CD8-positive, alpha-beta T cell (primary cell): ENCODE measurements at regions of chr12 and their contacts with region 1.

Region 1: DNA sequence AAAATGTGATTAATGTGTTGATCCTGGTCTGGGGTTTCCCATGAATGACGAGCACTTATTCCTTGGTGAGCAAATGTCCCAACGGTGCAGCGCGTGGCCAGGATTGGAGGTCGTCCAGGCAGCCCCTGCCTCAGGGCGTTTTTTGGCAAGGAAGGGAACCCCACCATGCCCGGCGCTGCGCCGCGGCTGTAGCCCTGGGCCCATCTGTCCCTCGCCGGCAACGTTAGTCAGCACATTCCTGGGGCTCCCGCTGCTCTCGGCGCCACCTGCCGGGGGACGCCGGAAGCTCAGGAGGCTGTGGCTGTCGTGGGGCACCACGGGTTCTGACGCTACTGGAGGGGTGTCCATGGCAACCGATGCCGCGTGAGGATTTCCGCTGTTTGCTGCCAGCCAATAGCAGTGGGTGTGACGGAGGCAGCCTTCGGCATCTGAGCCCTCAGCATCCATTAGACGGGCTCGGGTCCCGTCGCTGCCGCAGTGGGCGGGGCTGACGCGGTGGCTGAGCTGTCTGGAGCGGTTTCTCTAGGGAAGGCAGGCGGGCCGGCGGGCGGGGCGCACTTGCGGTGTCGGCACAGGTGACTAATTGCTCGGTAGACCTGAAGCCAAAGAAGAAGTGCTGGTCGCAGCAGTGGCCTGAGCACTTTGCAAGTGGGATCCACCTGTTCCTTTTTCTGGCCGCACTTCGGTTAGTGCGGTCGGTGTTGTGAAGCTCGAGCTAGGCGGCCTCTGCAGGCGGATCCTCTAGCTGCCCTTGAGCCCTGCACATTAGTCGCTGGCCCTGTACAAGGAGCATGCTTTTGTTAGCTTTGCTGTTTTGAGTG is 29.5 kb downstream of the RAB35 start:
- DNase-seq: peak; percentile 99 to 100 (median 99)
- ATAC-seq: peak; percentile 94
- H3K4me3 ChIP-seq: peak overlapping the region; percentile 54 to 55
- H3K4me3 Mint-ChIP-seq: peak overlapping the region; percentile 81
- H3K27ac ChIP-seq: peak overlapping the region; percentile 36 to 77
- H3K27ac Mint-ChIP-seq: peak overlapping the region; percentile 88
- H3K4me1 ChIP-seq: peaks cover 12% of the 10 kb centered on the region
- H3K4me1 Mint-ChIP-seq: peaks cover 11% of the 10 kb centered on the region
- H3K27me3 ChIP-seq: no peaks in the 10 kb centered on the region
- H3K27me3 Mint-ChIP-seq: no peaks in the 10 kb centered on the region
- CTCF ChIP-seq: peak; percentile 82

Region 2: DNA sequence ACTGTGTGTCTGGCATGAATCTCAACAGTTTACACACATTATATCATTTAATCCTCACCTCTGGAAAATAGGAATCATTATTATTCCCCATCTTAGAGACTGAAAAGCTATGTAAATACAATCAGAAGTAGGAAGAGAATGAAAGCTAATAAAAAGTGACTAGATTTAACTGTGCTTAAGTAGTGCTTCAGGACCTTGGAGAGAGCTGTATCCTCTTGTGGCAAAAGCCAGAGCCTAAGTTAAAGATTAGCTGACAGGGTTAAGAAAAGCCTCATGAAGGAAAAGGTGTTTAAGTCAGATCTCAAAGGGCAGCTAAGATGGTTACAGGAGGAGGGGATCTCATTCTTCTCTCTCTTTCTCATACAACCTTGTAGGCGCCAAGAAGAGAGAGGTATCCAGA is 558.8 kb before region 1 on chr12:
- CTCF ChIA-PET with region 1: no interaction called
- POLR2A ChIA-PET with region 1: no interaction called
- intact Hi-C with region 1: no loop called
- DNase-seq: no peak
- ATAC-seq: no peak
- H3K4me3 ChIP-seq: no peak overlapping the region
- H3K4me3 Mint-ChIP-seq: no peak overlapping the region
- H3K27ac ChIP-seq: no peak overlapping the region
- H3K27ac Mint-ChIP-seq: no peak overlapping the region
- H3K4me1 ChIP-seq: no peaks in the 10 kb centered on the region
- H3K4me1 Mint-ChIP-seq: no peaks in the 10 kb centered on the region
- H3K27me3 ChIP-seq: no peaks in the 10 kb centered on the region
- H3K27me3 Mint-ChIP-seq: peaks cover 12% of the 10 kb centered on the region
- CTCF ChIP-seq: no peak

Region 3: GRCh38 chr12:119667577-119668323 is 419.3 kb before region 1 on chr12 and contains the start of gene PRKAB1:
- CTCF ChIA-PET with region 1: no interaction called
- POLR2A ChIA-PET with region 1: no interaction called
- intact Hi-C with region 1: loop called in 1 of 2 experiments (anchors 1 kb)
- DNase-seq: peak; percentile 89 to 99 (median 94)
- ATAC-seq: peak; percentile 90
- H3K4me3 ChIP-seq: peak within 1 kb of the TSS; percentile 96 to 97
- H3K4me3 Mint-ChIP-seq: peak within 1 kb of the TSS; percentile 87
- H3K27ac ChIP-seq: peak within 1 kb of the TSS; percentile 75 to 88
- H3K27ac Mint-ChIP-seq: peak within 1 kb of the TSS; percentile 90
- H3K4me1 ChIP-seq: peaks cover 36% of the 10 kb centered on the region
- H3K4me1 Mint-ChIP-seq: peaks cover 59% of the 10 kb centered on the region
- H3K27me3 ChIP-seq: no peaks in the 10 kb centered on the region
- H3K27me3 Mint-ChIP-seq: no peaks in the 10 kb centered on the region
- CTCF ChIP-seq: peak; percentile 94
- total RNA-seq, gene PRKAB1: 17.9 to 23.7 TPM

Region 4: GRCh38 chr12:119931402-119931801 is 155.6 kb before region 1 on chr12:
- CTCF ChIA-PET with region 1: interaction called, 3 read pairs
- POLR2A ChIA-PET with region 1: no interaction called
- intact Hi-C with region 1: loop called (anchors 2 kb)
- DNase-seq: no peak
- ATAC-seq: no peak
- H3K4me3 ChIP-seq: no peak overlapping the region
- H3K4me3 Mint-ChIP-seq: no peak overlapping the region
- H3K27ac ChIP-seq: no peak overlapping the region
- H3K27ac Mint-ChIP-seq: no peak overlapping the region
- H3K4me1 ChIP-seq: no peaks in the 10 kb centered on the region
- H3K4me1 Mint-ChIP-seq: no peaks in the 10 kb centered on the region
- H3K27me3 ChIP-seq: no peaks in the 10 kb centered on the region
- H3K27me3 Mint-ChIP-seq: peaks cover 7% of the 10 kb centered on the region
- CTCF ChIP-seq: no peak

Region 5: GRCh38 chr12:119988782-119989668 is 98.0 kb before region 1 on chr12 and contains the start of gene BICDL1:
- CTCF ChIA-PET with region 1: interaction called, 19 read pairs
- POLR2A ChIA-PET with region 1: interaction called, 34 read pairs
- intact Hi-C with region 1: loop called (anchors 1 kb)
- DNase-seq: peak; percentile 94 to 99 (median 97)
- ATAC-seq: peak; percentile 87
- H3K4me3 ChIP-seq: peak within 1 kb of the TSS; percentile 54 to 63
- H3K4me3 Mint-ChIP-seq: peak within 1 kb of the TSS; percentile 88
- H3K27ac ChIP-seq: peak within 1 kb of the TSS; percentile 58 to 82
- H3K27ac Mint-ChIP-seq: peak within 1 kb of the TSS; percentile 97
- H3K4me1 ChIP-seq: peaks cover 22% of the 10 kb centered on the region
- H3K4me1 Mint-ChIP-seq: peaks cover 35% of the 10 kb centered on the region
- H3K27me3 ChIP-seq: no peaks in the 10 kb centered on the region
- H3K27me3 Mint-ChIP-seq: no peaks in the 10 kb centered on the region
- CTCF ChIP-seq: peak; percentile 14
- total RNA-seq, gene BICDL1: 138 to 154 TPM

Region 6: DNA sequence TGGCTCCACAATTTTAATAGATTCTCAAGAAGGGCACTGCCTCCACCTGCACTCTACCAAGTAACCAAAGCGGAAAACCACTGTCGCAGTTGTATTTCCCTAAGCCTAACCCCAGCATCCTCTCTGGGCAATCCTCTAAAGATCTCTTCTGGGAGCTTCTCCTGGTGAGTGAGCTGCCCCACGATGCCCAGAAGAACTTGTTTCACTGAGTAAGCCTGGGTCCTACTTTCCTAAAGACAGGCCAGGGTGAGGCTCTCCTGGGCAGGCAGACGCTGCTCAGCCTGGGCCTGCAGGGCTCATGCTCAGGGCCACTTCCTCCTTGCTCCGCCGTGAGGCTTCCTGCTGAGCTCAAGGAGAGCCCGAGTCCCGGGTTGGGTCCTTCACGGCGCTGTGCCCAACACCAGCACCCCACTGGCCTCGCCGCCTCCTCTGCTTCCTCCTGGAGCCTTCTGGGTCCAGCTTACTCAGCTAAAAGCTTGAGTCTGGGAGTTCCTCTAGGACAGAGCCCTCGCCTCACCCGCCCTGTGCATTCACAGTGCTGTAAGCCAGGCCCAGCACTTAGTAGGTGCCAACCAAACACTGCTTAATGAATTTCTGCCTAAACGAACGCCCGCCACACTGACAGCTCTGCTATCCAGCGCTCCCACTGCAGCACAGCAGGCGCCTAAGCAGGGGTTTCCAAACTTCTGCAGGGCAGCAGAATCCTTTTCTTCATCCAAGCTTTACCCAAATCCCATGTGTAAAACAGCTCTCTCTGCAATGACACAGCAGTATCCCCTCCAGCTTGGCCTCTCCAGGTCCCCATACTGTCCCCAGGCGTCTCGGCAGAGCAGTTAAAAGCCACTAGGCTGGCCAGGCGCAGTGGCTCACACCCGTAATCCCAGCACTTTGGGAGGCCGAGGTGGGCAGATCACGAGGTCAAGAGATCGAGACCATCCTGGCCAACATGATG is 23.8 kb after region 1 on chr12:
- CTCF ChIA-PET with region 1: interaction called, 10 read pairs
- POLR2A ChIA-PET with region 1: interaction called, 7 read pairs
- intact Hi-C with region 1: loop called (anchors 1 kb)
- DNase-seq: peak; percentile 14 to 71 (median 54)
- ATAC-seq: peak; percentile 79
- H3K4me3 ChIP-seq: peak overlapping the region; percentile 17 to 41
- H3K4me3 Mint-ChIP-seq: peak overlapping the region; percentile 72
- H3K27ac ChIP-seq: peak overlapping the region; percentile 21 to 62
- H3K27ac Mint-ChIP-seq: peak overlapping the region; percentile 86
- H3K4me1 ChIP-seq: peaks cover 41% of the 10 kb centered on the region
- H3K4me1 Mint-ChIP-seq: peaks cover 73% of the 10 kb centered on the region
- H3K27me3 ChIP-seq: no peaks in the 10 kb centered on the region
- H3K27me3 Mint-ChIP-seq: no peaks in the 10 kb centered on the region
- CTCF ChIP-seq: no peak

Region 7: GRCh38 chr12:120150919-120151525 is 64.0 kb after region 1 on chr12:
- CTCF ChIA-PET with region 1: no interaction called
- POLR2A ChIA-PET with region 1: no interaction called
- intact Hi-C with region 1: no loop called
- DNase-seq: no peak
- ATAC-seq: no peak
- H3K4me3 ChIP-seq: no peak overlapping the region
- H3K4me3 Mint-ChIP-seq: no peak overlapping the region
- H3K27ac ChIP-seq: no peak overlapping the region
- H3K27ac Mint-ChIP-seq: no peak overlapping the region
- H3K4me1 ChIP-seq: no peaks in the 10 kb centered on the region
- H3K4me1 Mint-ChIP-seq: no peaks in the 10 kb centered on the region
- H3K27me3 ChIP-seq: no peaks in the 10 kb centered on the region
- H3K27me3 Mint-ChIP-seq: no peaks in the 10 kb centered on the region
- CTCF ChIP-seq: no peak

Region 8: GRCh38 chr12:120167529-120168095 is 80.6 kb after region 1 on chr12:
- CTCF ChIA-PET with region 1: no interaction called
- POLR2A ChIA-PET with region 1: no interaction called
- intact Hi-C with region 1: no loop called
- DNase-seq: no peak
- ATAC-seq: no peak
- H3K4me3 ChIP-seq: no peak overlapping the region
- H3K4me3 Mint-ChIP-seq: no peak overlapping the region
- H3K27ac ChIP-seq: no peak overlapping the region
- H3K27ac Mint-ChIP-seq: no peak overlapping the region
- H3K4me1 ChIP-seq: no peaks in the 10 kb centered on the region
- H3K4me1 Mint-ChIP-seq: no peaks in the 10 kb centered on the region
- H3K27me3 ChIP-seq: no peaks in the 10 kb centered on the region
- H3K27me3 Mint-ChIP-seq: no peaks in the 10 kb centered on the region
- CTCF ChIP-seq: no peak

Region 9: GRCh38 chr12:120194534-120195395 is 107.8 kb after region 1 on chr12 and contains the start of gene GCN1:
- CTCF ChIA-PET with region 1: no interaction called
- POLR2A ChIA-PET with region 1: no interaction called
- intact Hi-C with region 1: loop called in 1 of 2 experiments (anchors 1 kb)
- DNase-seq: peak; percentile 76 to 94 (median 88)
- ATAC-seq: peak; percentile 86
- H3K4me3 ChIP-seq: peak within 1 kb of the TSS; percentile 67 to 72
- H3K4me3 Mint-ChIP-seq: peak within 1 kb of the TSS; percentile 82
- H3K27ac ChIP-seq: peak within 1 kb of the TSS; percentile 73 to 88
- H3K27ac Mint-ChIP-seq: peak within 1 kb of the TSS; percentile 95
- H3K4me1 ChIP-seq: peaks cover 36% of the 10 kb centered on the region
- H3K4me1 Mint-ChIP-seq: peaks cover 44% of the 10 kb centered on the region
- H3K27me3 ChIP-seq: no peaks in the 10 kb centered on the region
- H3K27me3 Mint-ChIP-seq: no peaks in the 10 kb centered on the region
- CTCF ChIP-seq: no peak
- total RNA-seq, gene GCN1: 161 to 163 TPM